B cell (primary cell): ENCODE measurements at regions of chr1 and their contacts with region 1.

Region 1: GRCh38 chr1:24415334-24415909 is at the start of gene NIPAL3:
- DNase-seq: peak; percentile 98
- ATAC-seq: peak; percentile 91
- H3K4me3 ChIP-seq: peak within 1 kb of the TSS; percentile 79 to 94 (median 86)
- H3K4me3 Mint-ChIP-seq: peak within 1 kb of the TSS; percentile 92
- H3K27ac ChIP-seq: peak within 1 kb of the TSS; percentile 37 to 55
- H3K27ac Mint-ChIP-seq: peak within 1 kb of the TSS; percentile 84
- H3K4me1 ChIP-seq: peaks cover 26 to 36% of the 10 kb centered on the region in 2 donors
- H3K4me1 Mint-ChIP-seq: peaks cover 49% of the 10 kb centered on the region
- H3K27me3 ChIP-seq: no peaks in the 10 kb centered on the region
- H3K27me3 Mint-ChIP-seq: no peaks in the 10 kb centered on the region
- CTCF ChIP-seq: peak; percentile 89
- total RNA-seq, gene NIPAL3: 31.6 and 38.8 TPM in 2 replicates

Region 2: DNA sequence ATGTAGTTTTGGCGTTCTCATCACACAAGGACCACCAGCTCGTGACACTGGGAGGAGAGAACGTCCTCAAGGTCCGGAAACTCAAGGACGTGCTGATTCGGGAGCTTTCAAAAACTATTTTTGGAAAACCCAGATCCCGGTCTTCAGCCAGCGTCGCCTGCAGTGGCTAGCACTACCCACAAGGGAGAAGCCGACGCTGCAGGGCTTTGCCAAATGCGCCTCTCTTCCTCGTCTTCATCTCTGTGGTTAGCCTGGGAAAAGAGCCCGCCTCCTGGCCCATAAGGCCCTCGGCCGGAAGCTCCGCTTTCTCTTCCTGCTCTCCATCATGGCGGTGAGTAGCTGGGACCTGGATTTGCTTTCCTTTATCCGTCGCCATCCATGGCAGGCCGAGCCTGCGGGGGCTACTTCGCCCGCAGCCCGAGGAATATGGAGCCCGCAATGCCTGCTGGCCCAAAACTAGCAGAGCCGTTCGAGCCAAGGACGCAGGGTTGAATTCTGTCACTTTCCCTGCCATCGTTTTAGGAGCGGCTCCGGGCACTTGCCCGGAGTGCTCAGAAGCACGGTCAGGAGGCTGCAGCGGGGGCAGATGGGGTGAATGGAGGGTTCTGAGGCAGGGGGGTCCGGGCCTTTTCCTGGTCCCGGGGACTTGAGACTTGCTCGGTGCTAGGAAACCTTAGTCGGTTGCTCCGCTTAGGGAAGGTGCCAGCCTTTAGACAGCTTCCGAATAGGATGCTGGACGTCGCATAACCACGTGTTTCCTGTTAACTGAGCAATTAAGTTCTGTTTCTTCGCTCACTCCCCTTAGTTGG is 723.7 kb before region 1 on chr1 and contains the start of gene RPL11:
- CTCF ChIA-PET with region 1: no interaction called
- POLR2A ChIA-PET with region 1: no interaction called
- intact Hi-C with region 1: loop called (anchors 10 kb)
- DNase-seq: peak; percentile 92
- ATAC-seq: peak; percentile 100
- H3K4me3 ChIP-seq: peak within 1 kb of the TSS; percentile 76 to 99 (median 77)
- H3K4me3 Mint-ChIP-seq: peak within 1 kb of the TSS; percentile 97
- H3K27ac ChIP-seq: peak within 1 kb of the TSS; percentile 79 to 84
- H3K27ac Mint-ChIP-seq: peak within 1 kb of the TSS; percentile 94
- H3K4me1 ChIP-seq: peaks cover 16 to 22% of the 10 kb centered on the region in 2 donors
- H3K4me1 Mint-ChIP-seq: peaks cover 48% of the 10 kb centered on the region
- H3K27me3 ChIP-seq: no peaks in the 10 kb centered on the region
- H3K27me3 Mint-ChIP-seq: no peaks in the 10 kb centered on the region
- CTCF ChIP-seq: peak; percentile 79
- total RNA-seq, gene RPL11: 1,439 and 1,539 TPM in 2 replicates

Region 3: DNA sequence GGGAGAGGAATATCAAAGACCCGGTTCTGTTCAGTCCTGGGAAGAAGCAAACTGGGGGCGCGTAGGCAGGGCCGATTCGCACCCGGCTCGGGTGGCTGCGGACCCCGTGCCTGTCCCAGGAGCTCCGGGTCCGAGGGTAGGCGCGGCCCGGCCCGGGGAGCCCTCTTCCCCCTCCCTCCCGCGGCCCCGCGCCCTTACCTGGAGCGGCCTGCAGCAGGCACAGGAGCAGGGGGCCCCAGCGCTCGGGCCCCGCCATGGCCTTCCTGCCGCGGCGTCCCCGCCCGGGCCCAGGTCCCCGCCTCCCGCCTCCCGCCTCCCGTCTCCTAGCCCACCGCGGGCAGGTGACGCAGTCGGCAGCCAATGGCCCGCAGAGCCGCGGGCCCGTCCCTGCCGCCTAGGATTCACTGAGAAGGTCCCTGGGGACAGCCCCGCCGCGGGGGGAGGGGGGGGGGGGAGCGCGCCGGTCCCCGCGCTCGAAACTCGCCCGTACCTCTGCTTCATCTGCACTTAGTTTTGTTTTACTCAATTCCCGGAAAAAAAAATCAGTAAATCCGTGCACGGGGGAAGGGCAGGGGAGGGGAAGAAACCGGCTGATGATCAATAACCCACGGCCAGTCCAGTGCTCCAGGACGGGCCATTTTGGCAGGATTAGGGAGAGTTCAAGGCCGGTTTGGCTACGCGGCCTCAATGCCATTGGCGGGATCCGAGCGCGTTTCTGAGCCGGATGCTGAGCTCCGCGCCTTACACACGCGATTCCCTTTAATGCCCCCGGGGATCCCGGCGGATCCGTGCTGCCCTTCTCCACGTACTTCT is 228.2 kb before region 1 on chr1 and contains the start of gene IFNLR1:
- CTCF ChIA-PET with region 1: interaction called, 5 read pairs
- POLR2A ChIA-PET with region 1: interaction called, 3 read pairs
- intact Hi-C with region 1: loop called (anchors 1 kb)
- DNase-seq: peak; percentile 87
- ATAC-seq: peak; percentile 57
- H3K4me3 ChIP-seq: peak within 1 kb of the TSS; percentile 65 to 85 (median 77)
- H3K4me3 Mint-ChIP-seq: peak within 1 kb of the TSS; percentile 95
- H3K27ac ChIP-seq: peak within 1 kb of the TSS; percentile 82
- H3K27ac Mint-ChIP-seq: peak within 1 kb of the TSS; percentile 93
- H3K4me1 ChIP-seq: peaks cover 69 to 78% of the 10 kb centered on the region in 2 donors
- H3K4me1 Mint-ChIP-seq: peaks cover 83% of the 10 kb centered on the region
- H3K27me3 ChIP-seq: no peaks in the 10 kb centered on the region
- H3K27me3 Mint-ChIP-seq: no peaks in the 10 kb centered on the region
- CTCF ChIP-seq: no peak
- total RNA-seq, gene IFNLR1: 38.0 and 39.7 TPM in 2 replicates

Region 4: DNA sequence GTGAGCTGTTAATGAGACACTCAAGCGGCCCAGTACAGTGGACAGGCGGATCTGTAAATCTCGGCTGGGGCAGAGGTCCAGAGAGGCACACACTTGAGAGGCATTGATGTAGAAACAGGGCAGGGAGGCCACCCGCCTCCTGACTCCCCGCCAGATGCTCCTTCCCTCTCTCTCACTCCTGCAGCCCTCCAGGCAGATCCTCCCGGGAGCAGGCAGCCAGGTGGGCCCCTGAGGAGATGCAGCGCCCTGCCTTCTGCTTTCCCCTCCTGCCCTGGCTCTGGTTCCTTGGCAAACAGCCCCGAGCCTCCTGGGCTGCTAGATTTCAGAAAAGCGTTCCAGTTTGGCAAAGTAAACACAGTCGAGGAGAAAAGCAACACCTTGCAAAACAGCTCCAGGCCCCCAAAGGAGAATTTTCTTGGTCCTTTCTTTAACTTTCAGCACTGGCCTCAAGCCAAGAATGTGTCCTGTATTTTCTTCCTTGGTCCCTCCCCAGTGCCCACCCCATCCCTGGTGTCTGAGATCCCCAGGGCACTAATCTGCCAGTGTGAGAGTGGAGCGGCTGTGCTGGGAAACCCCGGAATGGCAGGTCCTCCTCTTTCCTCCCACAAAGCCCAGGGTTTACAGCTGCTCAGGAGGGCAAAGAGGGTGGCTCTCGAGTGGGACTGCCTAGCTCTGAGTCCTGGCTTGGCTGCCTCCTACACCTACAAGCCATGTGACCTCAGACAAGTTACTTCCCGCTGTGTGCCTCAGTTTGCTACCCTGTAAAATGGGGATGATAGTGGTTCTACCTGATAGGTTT is 198.9 kb before region 1 on chr1:
- CTCF ChIA-PET with region 1: no interaction called
- POLR2A ChIA-PET with region 1: no interaction called
- intact Hi-C with region 1: no loop called
- DNase-seq: no peak
- ATAC-seq: no peak
- H3K4me3 ChIP-seq: no peak overlapping the region
- H3K4me3 Mint-ChIP-seq: no peak overlapping the region
- H3K27ac ChIP-seq: no peak overlapping the region
- H3K27ac Mint-ChIP-seq: no peak overlapping the region
- H3K4me1 ChIP-seq: no peaks in the 10 kb centered on the region
- H3K4me1 Mint-ChIP-seq: no peaks in the 10 kb centered on the region
- H3K27me3 ChIP-seq: peaks cover 0 to 9% (median 4%) of the 10 kb centered on the region in 4 experiments
- H3K27me3 Mint-ChIP-seq: peaks cover 20% of the 10 kb centered on the region
- CTCF ChIP-seq: no peak

Region 5: DNA sequence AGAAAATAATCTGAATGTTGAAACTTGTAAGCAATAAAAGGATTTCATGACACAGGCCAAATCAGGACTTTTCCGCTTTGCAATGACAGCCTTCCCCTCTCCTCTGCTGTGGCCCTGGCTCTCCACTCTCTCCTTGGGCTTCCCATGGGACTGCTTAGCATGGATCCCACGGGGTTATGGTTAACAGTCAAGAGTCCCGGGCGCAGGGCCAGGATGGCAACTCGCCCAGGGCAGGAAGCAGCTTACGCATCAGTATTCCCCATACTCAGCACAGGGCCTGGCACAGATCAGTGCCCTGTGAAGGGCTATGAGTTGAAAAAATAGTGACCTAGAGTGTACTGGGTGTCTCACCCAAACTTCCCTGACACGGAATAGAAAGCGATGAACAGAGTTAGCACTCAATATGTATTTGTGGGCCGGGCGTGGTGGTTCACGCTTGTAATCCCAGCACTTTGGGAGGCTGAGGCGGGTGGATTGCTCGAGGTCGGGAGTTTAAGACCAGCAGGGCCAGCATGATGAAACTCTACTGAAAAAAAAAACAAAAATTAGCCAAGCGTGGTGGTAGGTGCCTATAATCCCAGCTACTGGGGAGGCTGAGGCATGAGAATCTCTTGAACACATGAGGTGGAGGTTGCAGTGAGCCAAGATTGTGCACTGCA is 125.4 kb before region 1 on chr1:
- CTCF ChIA-PET with region 1: no interaction called
- POLR2A ChIA-PET with region 1: no interaction called
- intact Hi-C with region 1: no loop called
- DNase-seq: no peak
- ATAC-seq: no peak
- H3K4me3 ChIP-seq: no peak overlapping the region
- H3K4me3 Mint-ChIP-seq: no peak overlapping the region
- H3K27ac ChIP-seq: no peak overlapping the region
- H3K27ac Mint-ChIP-seq: no peak overlapping the region
- H3K4me1 ChIP-seq: no peaks in the 10 kb centered on the region
- H3K4me1 Mint-ChIP-seq: no peaks in the 10 kb centered on the region
- H3K27me3 ChIP-seq: no peaks in the 10 kb centered on the region
- H3K27me3 Mint-ChIP-seq: peaks cover 8% of the 10 kb centered on the region
- CTCF ChIP-seq: no peak

Region 6: DNA sequence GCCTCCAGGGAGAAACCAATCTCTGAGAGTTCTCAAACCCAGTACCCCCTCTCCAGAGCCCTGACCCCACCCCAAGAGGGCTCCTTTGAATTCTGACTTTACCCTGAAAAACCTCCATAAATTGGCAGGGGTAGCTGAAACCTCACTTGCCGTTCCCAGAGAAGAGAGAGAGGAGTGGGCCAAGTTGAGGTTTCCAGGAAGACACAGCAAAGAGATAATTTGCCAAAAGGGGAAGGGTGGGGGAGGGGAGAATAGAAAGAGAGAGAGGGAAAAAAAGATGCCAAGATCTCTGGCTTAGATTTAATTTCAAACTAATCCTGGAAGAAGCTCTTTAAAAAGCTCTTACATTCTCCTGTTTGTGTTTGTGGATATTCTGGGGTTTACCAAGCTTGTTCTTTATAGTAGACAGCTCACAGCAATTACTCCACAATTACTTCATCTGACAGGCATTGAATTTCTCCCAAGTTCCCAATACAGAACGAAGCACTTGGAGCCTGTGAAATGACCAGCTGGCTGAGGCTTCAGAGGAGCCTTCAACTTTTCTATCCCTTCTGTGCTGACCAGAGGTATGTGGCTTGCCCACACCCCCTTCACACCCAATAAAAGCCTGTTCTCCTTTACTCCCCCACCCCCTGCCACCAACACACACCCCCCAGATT is 97.3 kb before region 1 on chr1:
- CTCF ChIA-PET with region 1: no interaction called
- POLR2A ChIA-PET with region 1: no interaction called
- intact Hi-C with region 1: no loop called
- DNase-seq: no peak
- ATAC-seq: no peak
- H3K4me3 ChIP-seq: no peak overlapping the region
- H3K4me3 Mint-ChIP-seq: no peak overlapping the region
- H3K27ac ChIP-seq: no peak overlapping the region
- H3K27ac Mint-ChIP-seq: no peak overlapping the region
- H3K4me1 ChIP-seq: peaks cover 32 to 37% of the 10 kb centered on the region in 2 donors
- H3K4me1 Mint-ChIP-seq: peaks cover 41% of the 10 kb centered on the region
- H3K27me3 ChIP-seq: peaks cover 0 to 68% (median 40%) of the 10 kb centered on the region in 4 experiments
- H3K27me3 Mint-ChIP-seq: peaks cover 57% of the 10 kb centered on the region
- CTCF ChIP-seq: no peak

Region 7: DNA sequence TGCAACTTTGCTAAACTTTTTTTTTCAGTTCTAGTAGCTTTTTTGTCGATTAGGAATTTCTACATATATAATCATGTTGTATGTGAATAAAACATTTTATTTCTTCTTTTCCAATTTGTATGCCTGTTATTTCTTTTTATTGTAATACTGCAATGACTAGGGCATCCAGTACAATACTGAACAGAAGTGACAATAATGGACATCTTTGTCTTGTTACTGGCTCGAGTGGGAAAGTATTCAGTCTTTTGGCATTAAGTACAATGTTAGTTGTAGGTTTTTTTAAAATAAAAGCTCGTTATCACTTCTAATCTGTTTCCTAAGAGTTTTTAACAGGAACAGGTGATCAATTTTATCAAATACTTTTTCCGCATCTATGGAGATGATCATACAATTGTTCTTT is 11.6 kb before region 1 on chr1:
- CTCF ChIA-PET with region 1: interaction called, 11 read pairs
- POLR2A ChIA-PET with region 1: no interaction called
- intact Hi-C with region 1: no loop called
- DNase-seq: no peak
- ATAC-seq: no peak
- H3K4me3 ChIP-seq: no peak overlapping the region
- H3K4me3 Mint-ChIP-seq: no peak overlapping the region
- H3K27ac ChIP-seq: no peak overlapping the region
- H3K27ac Mint-ChIP-seq: no peak overlapping the region
- H3K4me1 ChIP-seq: no peaks in the 10 kb centered on the region
- H3K4me1 Mint-ChIP-seq: no peaks in the 10 kb centered on the region
- H3K27me3 ChIP-seq: no peaks in the 10 kb centered on the region
- H3K27me3 Mint-ChIP-seq: no peaks in the 10 kb centered on the region
- CTCF ChIP-seq: no peak

Region 8: GRCh38 chr1:24502709-24503058 is 87.3 kb after region 1 on chr1 and contains the start of gene RCAN3:
- CTCF ChIA-PET with region 1: interaction called, 12 read pairs
- POLR2A ChIA-PET with region 1: interaction called, 5 read pairs
- intact Hi-C with region 1: loop called (anchors 1 kb)
- DNase-seq: peak; percentile 93
- ATAC-seq: peak; percentile 86
- H3K4me3 ChIP-seq: peak within 1 kb of the TSS; percentile 66 to 92 (median 83)
- H3K4me3 Mint-ChIP-seq: peak within 1 kb of the TSS; percentile 97
- H3K27ac ChIP-seq: peak within 1 kb of the TSS; percentile 93 to 94
- H3K27ac Mint-ChIP-seq: peak within 1 kb of the TSS; percentile 96
- H3K4me1 ChIP-seq: peaks cover 43 to 46% of the 10 kb centered on the region in 2 donors
- H3K4me1 Mint-ChIP-seq: peaks cover 55% of the 10 kb centered on the region
- H3K27me3 ChIP-seq: no peaks in the 10 kb centered on the region
- H3K27me3 Mint-ChIP-seq: no peaks in the 10 kb centered on the region
- CTCF ChIP-seq: no peak
- total RNA-seq, gene RCAN3: 35.1 and 37.3 TPM in 2 replicates

Region 9: DNA sequence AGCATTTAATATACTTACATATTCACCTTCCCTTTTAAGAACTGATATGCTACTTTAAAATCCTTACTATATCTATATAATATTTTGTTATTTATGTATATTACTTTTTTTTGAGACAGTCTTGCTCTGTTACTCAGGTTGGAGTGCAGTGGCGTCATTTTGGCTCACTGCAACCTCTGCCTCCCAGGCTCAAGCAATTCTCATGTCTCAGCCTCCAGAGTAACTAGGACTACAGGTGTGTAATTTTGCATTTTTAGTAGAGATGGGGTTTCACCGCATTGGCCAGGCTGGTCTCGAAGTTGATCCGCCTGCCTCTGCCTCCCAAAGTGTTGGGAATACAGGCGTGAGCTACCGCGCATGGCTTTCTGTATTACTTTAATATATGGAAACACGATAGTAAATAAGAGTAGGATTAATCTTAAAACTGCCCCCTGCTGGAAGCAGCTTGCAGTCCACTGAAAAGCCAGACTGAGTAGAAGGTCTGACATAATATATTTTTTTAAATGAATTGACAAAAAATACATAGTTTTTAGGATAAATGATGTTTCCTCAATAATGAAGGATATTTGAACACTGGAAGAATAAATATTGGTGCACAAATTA is 111.6 kb after region 1 on chr1:
- CTCF ChIA-PET with region 1: interaction called, 30 read pairs
- POLR2A ChIA-PET with region 1: no interaction called
- intact Hi-C with region 1: loop called (anchors 2 kb)
- DNase-seq: peak; percentile 47
- ATAC-seq: no peak
- H3K4me3 ChIP-seq: no peak overlapping the region
- H3K4me3 Mint-ChIP-seq: no peak overlapping the region
- H3K27ac ChIP-seq: no peak overlapping the region
- H3K27ac Mint-ChIP-seq: no peak overlapping the region
- H3K4me1 ChIP-seq: no peaks in the 10 kb centered on the region
- H3K4me1 Mint-ChIP-seq: peaks cover 3% of the 10 kb centered on the region
- H3K27me3 ChIP-seq: no peaks in the 10 kb centered on the region
- H3K27me3 Mint-ChIP-seq: no peaks in the 10 kb centered on the region
- CTCF ChIP-seq: peak; percentile 71

Region 10: GRCh38 chr1:24536391-24536840 is 121.0 kb after region 1 on chr1:
- CTCF ChIA-PET with region 1: interaction called, 6 read pairs
- POLR2A ChIA-PET with region 1: no interaction called
- intact Hi-C with region 1: loop called (anchors 2 kb)
- DNase-seq: peak; percentile 85
- ATAC-seq: peak; percentile 76
- H3K4me3 ChIP-seq: peak overlapping the region in 3 of 5 experiments; percentile 19 to 45 (median 20)
- H3K4me3 Mint-ChIP-seq: peak overlapping the region; percentile 83
- H3K27ac ChIP-seq: peak overlapping the region; percentile 74 to 97
- H3K27ac Mint-ChIP-seq: peak overlapping the region; percentile 98
- H3K4me1 ChIP-seq: peaks cover 54 to 60% of the 10 kb centered on the region in 2 donors
- H3K4me1 Mint-ChIP-seq: peaks cover 68% of the 10 kb centered on the region
- H3K27me3 ChIP-seq: no peaks in the 10 kb centered on the region
- H3K27me3 Mint-ChIP-seq: no peaks in the 10 kb centered on the region
- CTCF ChIP-seq: no peak